ENCODE measurements at regions of chr9 and their contacts with region 1.

Region 1: DNA sequence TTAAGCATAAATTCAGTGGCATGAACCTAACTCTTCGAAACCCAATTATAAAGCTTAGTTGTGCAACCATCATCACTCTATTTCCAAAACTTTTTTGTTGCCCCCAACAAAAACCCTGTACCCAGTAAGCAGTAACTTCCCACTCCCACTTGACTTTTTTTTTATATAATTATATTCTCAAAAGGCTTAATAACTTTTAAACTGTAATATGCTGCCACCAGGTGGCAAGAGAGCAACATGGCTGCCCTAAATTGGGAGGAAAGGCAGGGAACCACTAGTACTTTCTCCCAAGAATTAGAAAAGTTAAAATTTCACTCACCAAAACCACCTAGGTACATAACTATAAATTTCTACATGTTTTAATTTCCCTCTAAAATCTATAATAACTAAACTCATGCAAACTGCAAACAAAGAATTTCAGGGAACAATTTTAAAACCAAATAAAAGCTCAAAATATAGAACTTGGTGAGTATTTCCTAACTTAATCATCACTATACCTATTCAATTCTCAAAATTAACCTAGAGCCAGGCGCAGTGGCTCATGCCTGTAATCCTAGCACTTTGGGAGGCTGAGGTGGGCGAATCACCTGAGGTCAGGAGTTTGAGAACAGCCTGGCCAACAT is 50.2 kb upstream of the RNF38 start:
- DNase-seq: peak; percentile 50
- H3K4me3 ChIP-seq: no peak overlapping the region
- H3K27ac ChIP-seq: no peak overlapping the region
- H3K4me1 ChIP-seq: no peaks in the 10 kb centered on the region
- H3K27me3 ChIP-seq: no peaks in the 10 kb centered on the region
- CTCF ChIP-seq: peak; percentile 51 to 58
- POLR2A ChIP-seq: no peak

Region 2: GRCh38 chr9:36204906-36205547 is 245.2 kb before region 1 on chr9:
- CTCF ChIA-PET with region 1: no interaction called
- POLR2A ChIA-PET with region 1: no interaction called
- dilution Hi-C with region 1: no loop called
- intact Hi-C with region 1: no loop called
- DNase-seq: peak; percentile 15
- H3K4me3 ChIP-seq: no peak overlapping the region
- H3K27ac ChIP-seq: no peak overlapping the region
- H3K4me1 ChIP-seq: peaks cover 31% of the 10 kb centered on the region
- H3K27me3 ChIP-seq: no peaks in the 10 kb centered on the region
- CTCF ChIP-seq: no peak
- POLR2A ChIP-seq: no peak

Region 3: DNA sequence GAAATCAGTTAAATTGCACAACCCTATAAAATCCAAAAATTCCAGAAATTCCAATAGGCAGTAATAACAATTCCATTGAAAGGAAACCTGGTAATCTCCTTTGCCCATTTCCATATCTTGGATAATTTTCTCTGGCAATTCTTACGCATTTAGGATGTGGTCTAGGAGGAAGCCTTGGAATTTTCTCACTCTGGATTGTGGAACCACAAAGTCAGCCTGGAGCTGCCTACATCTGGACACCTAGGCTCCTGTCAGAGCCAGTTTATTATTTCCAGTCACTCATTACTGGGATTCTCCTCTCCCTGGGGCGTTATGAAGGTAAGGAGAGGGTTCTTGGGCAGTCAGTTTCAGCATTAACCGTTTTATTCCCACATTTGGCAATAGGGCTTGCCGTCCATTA is 151.6 kb before region 1 on chr9:
- CTCF ChIA-PET with region 1: no interaction called
- POLR2A ChIA-PET with region 1: no interaction called
- dilution Hi-C with region 1: no loop called
- intact Hi-C with region 1: no loop called
- DNase-seq: no peak
- H3K4me3 ChIP-seq: no peak overlapping the region
- H3K27ac ChIP-seq: no peak overlapping the region
- H3K4me1 ChIP-seq: peaks cover 4% of the 10 kb centered on the region
- H3K27me3 ChIP-seq: no peaks in the 10 kb centered on the region
- CTCF ChIP-seq: no peak
- POLR2A ChIP-seq: no peak

Region 4: DNA sequence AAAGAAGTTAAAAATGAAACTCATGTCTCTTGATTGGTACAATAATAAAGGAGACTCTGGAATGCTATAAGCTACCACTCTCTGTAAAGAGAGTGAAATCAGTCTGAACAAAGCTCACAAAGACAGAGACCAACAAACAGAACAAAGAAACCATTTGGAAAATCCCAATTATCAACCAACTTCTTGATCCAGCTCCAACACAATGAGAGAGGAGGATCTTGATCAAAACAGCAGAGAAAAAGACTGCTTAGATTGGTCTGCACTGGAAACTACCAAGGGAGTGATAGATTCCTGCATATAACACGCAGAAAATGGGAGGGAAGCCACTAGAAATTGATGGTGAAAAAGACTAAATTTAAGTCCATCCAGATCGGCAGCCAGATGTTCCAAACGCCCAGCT is 27.0 kb before region 1 on chr9:
- CTCF ChIA-PET with region 1: interaction called, 10 read pairs
- POLR2A ChIA-PET with region 1: no interaction called
- dilution Hi-C with region 1: no loop called
- intact Hi-C with region 1: no loop called
- DNase-seq: no peak
- H3K4me3 ChIP-seq: no peak overlapping the region
- H3K27ac ChIP-seq: no peak overlapping the region
- H3K4me1 ChIP-seq: peaks cover 19% of the 10 kb centered on the region
- H3K27me3 ChIP-seq: no peaks in the 10 kb centered on the region
- CTCF ChIP-seq: no peak
- POLR2A ChIP-seq: no peak

Region 5: DNA sequence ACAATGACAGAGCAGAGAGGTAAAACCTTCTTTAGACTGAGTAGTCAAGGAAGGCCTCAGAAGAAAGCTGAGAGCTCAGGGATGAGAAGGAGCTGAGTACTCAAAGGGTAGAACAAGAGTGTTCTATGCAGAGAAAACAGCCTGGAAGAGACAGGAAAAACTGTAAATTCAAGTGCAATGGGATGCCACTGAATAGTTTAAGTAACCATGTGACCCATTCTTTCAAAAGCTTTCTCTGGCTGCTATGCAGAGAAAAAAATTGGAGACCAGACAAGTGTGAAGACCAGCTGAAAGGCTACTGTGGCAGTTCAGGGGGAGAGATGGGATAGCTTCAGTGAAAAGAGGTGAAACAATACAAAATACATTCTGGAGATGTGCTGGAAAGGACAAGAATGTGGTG is 11.1 kb after region 1 on chr9:
- CTCF ChIA-PET with region 1: interaction called, 14 read pairs
- POLR2A ChIA-PET with region 1: no interaction called
- dilution Hi-C with region 1: no loop called
- intact Hi-C with region 1: no loop called
- DNase-seq: no peak
- H3K4me3 ChIP-seq: no peak overlapping the region
- H3K27ac ChIP-seq: no peak overlapping the region
- H3K4me1 ChIP-seq: peaks cover 12% of the 10 kb centered on the region
- H3K27me3 ChIP-seq: no peaks in the 10 kb centered on the region
- CTCF ChIP-seq: no peak
- POLR2A ChIP-seq: no peak

Region 6: DNA sequence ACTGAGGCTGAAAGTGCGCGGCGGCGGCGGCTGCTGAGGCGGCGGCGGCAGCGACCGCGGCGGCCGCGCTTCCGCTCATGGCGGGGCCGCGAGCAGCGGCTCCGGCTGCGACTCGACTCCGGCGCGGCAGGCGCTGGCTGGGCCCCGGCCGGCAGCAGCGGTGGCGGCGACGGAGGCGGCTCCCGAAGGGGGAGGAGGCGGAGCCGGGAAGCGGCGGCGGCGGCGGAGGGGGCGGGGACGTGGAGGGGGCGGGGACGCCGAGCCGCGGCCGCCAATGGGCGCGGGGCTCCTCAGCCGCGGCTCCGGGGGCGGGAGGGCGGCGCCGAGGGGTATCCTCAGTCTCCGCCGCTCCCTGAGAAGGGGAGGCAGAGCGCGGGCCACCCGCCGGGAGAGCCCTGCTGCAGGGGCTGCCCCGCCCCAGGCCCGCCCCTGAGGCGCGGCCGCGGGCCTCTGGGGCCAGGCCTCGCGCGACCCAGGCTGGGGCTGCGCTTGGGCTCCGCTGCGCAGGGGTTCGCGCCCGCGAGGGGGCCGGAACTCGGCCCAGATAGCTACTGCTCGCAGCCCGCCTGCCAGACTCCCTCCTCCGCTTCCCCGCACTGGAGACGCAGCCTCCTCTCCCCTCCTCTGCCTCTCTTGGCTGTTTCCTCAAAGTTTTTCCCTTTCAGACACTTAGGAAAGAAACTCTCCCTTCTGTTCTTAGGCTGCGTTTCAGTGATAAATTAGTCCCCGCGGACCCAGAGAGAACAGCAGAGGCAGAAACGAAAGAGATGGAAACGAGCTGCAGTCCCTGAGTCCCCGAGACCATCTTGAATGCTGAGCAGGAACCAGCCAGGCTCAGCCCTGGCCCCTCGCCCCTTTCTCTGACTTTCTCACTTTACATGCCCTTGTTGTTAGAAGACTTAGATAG is 37.5 kb after region 1 on chr9:
- CTCF ChIA-PET with region 1: interaction called, 10 read pairs
- POLR2A ChIA-PET with region 1: no interaction called
- dilution Hi-C with region 1: no loop called
- intact Hi-C with region 1: loop called (anchors 2 kb)
- DNase-seq: peak; percentile 88
- H3K4me3 ChIP-seq: peak overlapping the region; percentile 67 to 89 (median 75)
- H3K27ac ChIP-seq: peak overlapping the region; percentile 81
- H3K4me1 ChIP-seq: peaks cover 23% of the 10 kb centered on the region
- H3K27me3 ChIP-seq: no peaks in the 10 kb centered on the region
- CTCF ChIP-seq: peak in 1 of 2 donors; percentile 6
- POLR2A ChIP-seq: peak; percentile 82

Region 7: GRCh38 chr9:36560857-36561221 is 110.6 kb after region 1 on chr9:
- CTCF ChIA-PET with region 1: interaction called, 27 read pairs
- POLR2A ChIA-PET with region 1: no interaction called
- dilution Hi-C with region 1: no loop called
- intact Hi-C with region 1: no loop called
- DNase-seq: no peak
- H3K4me3 ChIP-seq: no peak overlapping the region
- H3K27ac ChIP-seq: no peak overlapping the region
- H3K4me1 ChIP-seq: no peaks in the 10 kb centered on the region
- H3K27me3 ChIP-seq: no peaks in the 10 kb centered on the region
- CTCF ChIP-seq: no peak
- POLR2A ChIP-seq: no peak

Measured in endothelial cell of umbilical vein (primary cell).